GM23248 (cell line): ENCODE measurements at regions of chr13 and their contacts with region 1.

Region 1: GRCh38 chr13:111066544-111066943 is 48.6 kb upstream of the ARHGEF7 start:
- DNase-seq: no peak
- H3K4me3 ChIP-seq: no peak overlapping the region
- H3K27ac ChIP-seq: no peak overlapping the region
- H3K4me1 ChIP-seq: no peaks in the 10 kb centered on the region; the same call in 1 of the 2 replicates
- H3K27me3 ChIP-seq: no peaks in the 10 kb centered on the region

Region 2: GRCh38 chr13:111228262-111229144 is 162.0 kb after region 1 on chr13:
- in situ Hi-C with region 1: loop called (anchors 10 kb)
- DNase-seq: no peak
- H3K4me3 ChIP-seq: no peak overlapping the region
- H3K27ac ChIP-seq: no peak overlapping the region
- H3K4me1 ChIP-seq: peaks cover 6% of the 10 kb centered on the region; the same call in 1 of the 2 replicates
- H3K27me3 ChIP-seq: no peaks in the 10 kb centered on the region